Naive thymus-derived CD8-positive, alpha-beta T cell (primary cell): ENCODE measurements at regions of chr2 and their contacts with region 1.

Region 1: GRCh38 chr2:158969715-158970245 is 1.3 kb downstream of the TANC1 start:
- DNase-seq: peak in 1 of 10 donors; percentile 7
- ATAC-seq: no peak
- H3K4me3 Mint-ChIP-seq: peak overlapping the region; percentile 70 to 90 (median 83)
- H3K27ac Mint-ChIP-seq: no peak overlapping the region
- H3K4me1 Mint-ChIP-seq: peaks cover 7 to 17% (median 15%) of the 10 kb centered on the region in 4 donors
- H3K27me3 Mint-ChIP-seq: peaks cover 20 to 54% (median 41%) of the 10 kb centered on the region in 5 donors

Region 2: DNA sequence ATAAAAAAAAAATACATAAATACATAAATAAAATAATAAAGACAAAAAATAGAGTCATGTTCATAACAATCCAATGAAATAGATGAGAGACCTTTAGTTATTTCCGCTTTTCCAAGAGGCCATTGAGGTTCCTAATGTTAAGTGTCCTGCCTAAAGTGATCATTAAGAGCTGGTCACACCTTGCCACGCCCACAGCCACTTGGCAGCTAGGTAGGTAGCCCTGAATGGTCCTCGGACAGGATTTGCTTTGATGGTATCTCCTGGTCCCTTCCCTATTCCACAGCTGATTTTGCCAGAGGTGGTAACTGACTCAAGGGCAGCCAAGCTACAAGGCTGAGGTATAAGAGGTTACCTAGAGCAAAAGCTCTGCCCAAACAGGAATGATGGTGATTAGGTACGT is 25.8 kb before region 1 on chr2:
- POLR2A ChIA-PET with region 1: no interaction called
- DNase-seq: no peak
- ATAC-seq: no peak
- H3K4me3 Mint-ChIP-seq: no peak overlapping the region
- H3K27ac Mint-ChIP-seq: no peak overlapping the region
- H3K4me1 Mint-ChIP-seq: no peaks in the 10 kb centered on the region
- H3K27me3 Mint-ChIP-seq: no peaks in the 10 kb centered on the region

Region 3: GRCh38 chr2:158984604-158985135 is 14.9 kb after region 1 on chr2:
- POLR2A ChIA-PET with region 1: no interaction called
- DNase-seq: no peak
- ATAC-seq: no peak
- H3K4me3 Mint-ChIP-seq: no peak overlapping the region
- H3K27ac Mint-ChIP-seq: peak overlapping the region in 2 of 10 donors; percentile 41 to 56
- H3K4me1 Mint-ChIP-seq: no peaks in the 10 kb centered on the region
- H3K27me3 Mint-ChIP-seq: peaks cover 0 to 3% (median 1%) of the 10 kb centered on the region in 5 donors

Region 4: GRCh38 chr2:159706385-159706980 is 736.7 kb after region 1 on chr2:
- POLR2A ChIA-PET with region 1: interaction called, 10 read pairs
- DNase-seq: no peak
- ATAC-seq: no peak
- H3K4me3 Mint-ChIP-seq: no peak overlapping the region
- H3K27ac Mint-ChIP-seq: no peak overlapping the region
- H3K4me1 Mint-ChIP-seq: peaks cover 0 to 12% (median 5%) of the 10 kb centered on the region in 4 donors
- H3K27me3 Mint-ChIP-seq: no peaks in the 10 kb centered on the region